H1 (cell line): ENCODE measurements at regions of chr3 and their contacts with region 1.

Region 1: GRCh38 chr3:125428216-125428830 is 53.2 kb upstream of the ZNF148 start:
- DNase-seq: no peak
- H3K4me3 ChIP-seq: no peak overlapping the region
- H3K27ac ChIP-seq: no peak overlapping the region
- H3K4me1 ChIP-seq: no peaks in the 10 kb centered on the region
- H3K27me3 ChIP-seq: no peaks in the 10 kb centered on the region
- CTCF ChIP-seq: no peak
- EP300 ChIP-seq: no peak
- POLR2A ChIP-seq: no peak
- RAD21 ChIP-seq: no peak

Region 2: DNA sequence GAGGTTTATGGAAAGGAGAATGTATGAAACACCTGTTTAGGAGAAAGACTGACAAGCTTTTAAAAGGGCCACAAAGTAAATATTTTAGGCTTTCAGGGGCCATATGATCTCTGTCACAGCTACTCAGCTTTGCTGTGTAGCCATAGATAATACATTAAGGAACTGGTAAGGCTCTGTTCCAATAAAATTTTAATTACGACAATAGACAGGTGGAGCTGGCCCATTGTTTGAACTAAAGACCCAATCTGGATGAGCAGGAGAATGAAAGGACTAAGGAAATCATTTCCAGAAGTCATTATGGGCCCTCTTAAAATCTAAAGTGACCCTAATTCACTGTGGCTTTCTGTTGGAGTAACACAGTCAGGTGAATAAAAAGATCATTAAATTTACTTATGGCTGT is 167.3 kb before region 1 on chr3:
- CTCF ChIA-PET with region 1: no interaction called
- POLR2A ChIA-PET with region 1: no interaction called
- DNase-seq: no peak
- H3K4me3 ChIP-seq: no peak overlapping the region
- H3K27ac ChIP-seq: no peak overlapping the region
- H3K4me1 ChIP-seq: no peaks in the 10 kb centered on the region
- H3K27me3 ChIP-seq: no peaks in the 10 kb centered on the region
- CTCF ChIP-seq: no peak
- EP300 ChIP-seq: no peak
- POLR2A ChIP-seq: no peak
- RAD21 ChIP-seq: no peak

Region 3: GRCh38 chr3:125310623-125311081 is 117.7 kb before region 1 on chr3:
- CTCF ChIA-PET with region 1: no interaction called
- POLR2A ChIA-PET with region 1: no interaction called
- DNase-seq: no peak
- H3K4me3 ChIP-seq: no peak overlapping the region
- H3K27ac ChIP-seq: no peak overlapping the region
- H3K4me1 ChIP-seq: no peaks in the 10 kb centered on the region
- H3K27me3 ChIP-seq: no peaks in the 10 kb centered on the region
- CTCF ChIP-seq: no peak
- EP300 ChIP-seq: no peak
- POLR2A ChIP-seq: no peak
- RAD21 ChIP-seq: no peak

Region 4: GRCh38 chr3:125349556-125350165 is 78.7 kb before region 1 on chr3:
- CTCF ChIA-PET with region 1: no interaction called
- POLR2A ChIA-PET with region 1: no interaction called
- DNase-seq: no peak
- H3K4me3 ChIP-seq: no peak overlapping the region
- H3K27ac ChIP-seq: no peak overlapping the region
- H3K4me1 ChIP-seq: no peaks in the 10 kb centered on the region
- H3K27me3 ChIP-seq: no peaks in the 10 kb centered on the region
- CTCF ChIP-seq: no peak
- EP300 ChIP-seq: no peak
- POLR2A ChIP-seq: no peak
- RAD21 ChIP-seq: no peak

Region 5: GRCh38 chr3:125440559-125440955 is 12.2 kb after region 1 on chr3:
- CTCF ChIA-PET with region 1: interaction called, 13 read pairs
- POLR2A ChIA-PET with region 1: interaction called, 5 read pairs
- DNase-seq: peak in 1 of 2 experiments; percentile 43
- H3K4me3 ChIP-seq: no peak overlapping the region
- H3K27ac ChIP-seq: no peak overlapping the region
- H3K4me1 ChIP-seq: peaks cover 0 to 4% (median 0%) of the 10 kb centered on the region in 4 experiments; a peak in 2 of 7 replicates
- H3K27me3 ChIP-seq: no peaks in the 10 kb centered on the region
- CTCF ChIP-seq: no peak
- EP300 ChIP-seq: no peak
- POLR2A ChIP-seq: no peak
- RAD21 ChIP-seq: no peak

Region 6: GRCh38 chr3:125644036-125645010 is 216.0 kb after region 1 on chr3:
- CTCF ChIA-PET with region 1: no interaction called
- POLR2A ChIA-PET with region 1: no interaction called
- DNase-seq: no peak
- H3K4me3 ChIP-seq: no peak overlapping the region
- H3K27ac ChIP-seq: no peak overlapping the region
- H3K4me1 ChIP-seq: no peaks in the 10 kb centered on the region
- H3K27me3 ChIP-seq: no peaks in the 10 kb centered on the region
- CTCF ChIP-seq: no peak
- EP300 ChIP-seq: no peak
- POLR2A ChIP-seq: no peak
- RAD21 ChIP-seq: no peak